ENCODE measurements at regions of chr1 and their contacts with region 1.

Region 1: DNA sequence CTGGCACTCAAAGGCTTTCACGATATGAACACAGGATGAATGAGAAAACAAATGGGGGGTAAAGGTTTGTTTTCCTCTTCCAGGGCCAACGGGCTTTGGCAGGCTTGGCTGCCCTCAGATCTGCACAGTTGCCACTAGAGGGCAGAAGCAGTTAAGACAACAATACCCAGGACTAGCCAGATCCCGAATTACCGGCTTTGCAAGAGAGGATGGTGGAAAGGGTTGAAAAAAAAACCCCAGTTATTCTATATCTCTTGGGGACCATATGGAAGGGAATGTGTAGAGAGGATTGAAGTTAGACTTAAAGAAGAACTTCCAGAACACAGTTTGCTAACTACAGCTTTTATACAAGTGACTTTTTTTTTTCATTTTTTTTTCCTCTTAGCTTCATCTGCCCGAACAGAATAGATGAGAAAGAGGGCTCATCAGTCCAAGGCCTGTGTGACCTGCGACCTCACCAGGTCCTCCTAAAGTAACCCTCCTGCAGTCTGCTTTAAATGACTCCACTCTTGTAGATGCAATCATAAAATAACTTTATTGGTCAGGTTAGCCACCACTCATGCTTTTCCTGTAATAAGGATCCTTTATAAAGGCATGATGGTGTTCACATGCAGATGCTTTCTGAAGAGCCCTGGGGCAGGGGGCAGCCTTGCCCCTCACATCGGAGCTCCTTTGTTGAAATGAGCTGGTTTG is 10.7 kb downstream of the FMOD start:
- DNase-seq: peak; percentile 94
- ATAC-seq: peak; percentile 90
- H3K4me3 ChIP-seq: no peak overlapping the region
- H3K27ac ChIP-seq: no peak overlapping the region
- H3K4me1 ChIP-seq: no peaks in the 10 kb centered on the region; the same call in 1 of the 2 replicates
- H3K27me3 ChIP-seq: peaks cover 26% of the 10 kb centered on the region
- CTCF ChIP-seq: peak; percentile 98

Region 2: DNA sequence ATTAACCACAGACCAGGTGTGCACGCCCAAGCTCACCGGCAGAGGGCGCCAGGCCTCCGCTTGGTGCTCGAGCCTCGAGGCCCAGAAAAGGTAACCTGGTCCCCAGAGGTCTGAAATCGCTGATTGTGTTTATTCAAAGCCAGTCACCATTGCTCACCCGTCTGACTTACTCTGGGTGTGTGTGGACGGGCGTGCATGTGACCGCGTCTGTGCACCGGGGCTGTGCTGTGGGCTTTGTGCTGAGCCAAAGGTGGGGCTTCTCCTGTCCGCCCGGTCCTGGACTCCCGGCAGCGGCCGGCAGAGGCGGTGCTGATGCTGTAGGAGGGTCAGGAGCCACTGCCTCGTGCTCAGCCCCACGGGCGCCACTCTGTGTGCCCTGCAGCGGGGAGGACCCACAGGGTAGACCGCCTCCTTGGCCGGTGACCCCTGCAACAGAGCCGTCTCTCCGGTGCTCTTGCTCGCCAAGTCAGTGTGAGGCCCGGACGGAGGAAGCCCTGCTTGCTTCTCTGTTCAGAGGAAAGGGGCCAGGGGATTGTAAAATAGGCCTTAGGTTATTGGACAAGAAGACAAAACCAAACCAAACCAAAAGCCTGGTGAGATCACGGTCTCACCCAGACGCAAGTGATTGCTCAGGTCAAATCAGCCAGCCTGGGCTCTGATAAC is 66.9 kb before region 1 on chr1:
- CTCF ChIA-PET with region 1: interaction called, 9 read pairs
- POLR2A ChIA-PET with region 1: no interaction called
- intact Hi-C with region 1: loop called (anchors 1 kb)
- DNase-seq: peak; percentile 98
- ATAC-seq: peak; percentile 90
- H3K4me3 ChIP-seq: peak overlapping the region; percentile 33; the same call in 1 of the 2 replicates
- H3K27ac ChIP-seq: no peak overlapping the region
- H3K4me1 ChIP-seq: peaks cover 19% of the 10 kb centered on the region
- H3K27me3 ChIP-seq: no peaks in the 10 kb centered on the region
- CTCF ChIP-seq: peak; percentile 99

Region 3: DNA sequence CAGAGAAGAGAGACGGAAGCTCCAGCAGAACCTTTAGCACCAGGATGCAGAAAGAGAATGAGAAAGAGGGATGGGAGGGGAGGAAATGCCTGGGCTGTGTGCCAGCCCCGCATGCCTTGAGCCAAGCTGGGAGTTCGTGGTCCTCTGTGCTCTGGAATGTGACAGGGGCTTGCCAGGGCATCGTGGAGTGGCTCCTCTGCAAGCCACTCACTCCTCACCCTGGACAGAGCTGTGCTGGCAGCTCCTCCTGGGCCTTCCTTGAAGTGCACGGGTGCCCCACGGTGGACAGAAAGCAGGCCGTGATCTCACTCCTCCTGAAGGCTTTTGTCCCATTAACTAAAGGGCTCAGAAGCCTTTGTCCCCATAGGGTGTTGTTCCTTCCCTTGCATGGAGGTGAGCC is 100.5 kb after region 1 on chr1:
- CTCF ChIA-PET with region 1: interaction called, 6 read pairs
- POLR2A ChIA-PET with region 1: no interaction called
- intact Hi-C with region 1: loop called (anchors 1 kb)
- DNase-seq: peak; percentile 47
- ATAC-seq: peak; percentile 95
- H3K4me3 ChIP-seq: no peak overlapping the region
- H3K27ac ChIP-seq: no peak overlapping the region
- H3K4me1 ChIP-seq: no peaks in the 10 kb centered on the region
- H3K27me3 ChIP-seq: peaks cover 66% of the 10 kb centered on the region
- CTCF ChIP-seq: peak; percentile 60

Region 4: GRCh38 chr1:203470229-203470628 is 130.0 kb after region 1 on chr1:
- CTCF ChIA-PET with region 1: interaction called, 11 read pairs
- POLR2A ChIA-PET with region 1: no interaction called
- intact Hi-C with region 1: no loop called
- DNase-seq: no peak
- ATAC-seq: no peak
- H3K4me3 ChIP-seq: no peak overlapping the region
- H3K27ac ChIP-seq: no peak overlapping the region
- H3K4me1 ChIP-seq: 0 out of 2 replicates have a peak, but pooled peaks cover 3% of the 10 kb centered on the region
- H3K27me3 ChIP-seq: peaks cover 10% of the 10 kb centered on the region; the same call in 1 of the 2 replicates
- CTCF ChIP-seq: no peak

Region 5: GRCh38 chr1:203486618-203487370 is 146.5 kb after region 1 on chr1:
- CTCF ChIA-PET with region 1: interaction called, 9 read pairs
- POLR2A ChIA-PET with region 1: no interaction called
- intact Hi-C with region 1: loop called (anchors 1 kb)
- DNase-seq: no peak
- ATAC-seq: no peak
- H3K4me3 ChIP-seq: no peak overlapping the region
- H3K27ac ChIP-seq: no peak overlapping the region
- H3K4me1 ChIP-seq: no peaks in the 10 kb centered on the region
- H3K27me3 ChIP-seq: no peaks in the 10 kb centered on the region
- CTCF ChIP-seq: no peak

Region 6: GRCh38 chr1:203504397-203505250 is 164.4 kb after region 1 on chr1:
- CTCF ChIA-PET with region 1: no interaction called
- POLR2A ChIA-PET with region 1: no interaction called
- intact Hi-C with region 1: loop called (anchors 1 kb)
- DNase-seq: peak; percentile 94
- ATAC-seq: peak; percentile 91
- H3K4me3 ChIP-seq: peak overlapping the region; percentile 14; the same call in 1 of the 2 replicates
- H3K27ac ChIP-seq: no peak overlapping the region
- H3K4me1 ChIP-seq: peaks cover 20% of the 10 kb centered on the region; the same call in 1 of the 2 replicates
- H3K27me3 ChIP-seq: no peaks in the 10 kb centered on the region
- CTCF ChIP-seq: peak; percentile 96

Region 7: GRCh38 chr1:203520315-203520714 is 180.1 kb after region 1 on chr1:
- CTCF ChIA-PET with region 1: no interaction called
- POLR2A ChIA-PET with region 1: no interaction called
- intact Hi-C with region 1: no loop called
- DNase-seq: no peak
- ATAC-seq: peak; percentile 34; the same call in 1 of the 2 replicates
- H3K4me3 ChIP-seq: no peak overlapping the region
- H3K27ac ChIP-seq: no peak overlapping the region
- H3K4me1 ChIP-seq: peaks cover 17% of the 10 kb centered on the region
- H3K27me3 ChIP-seq: no peaks in the 10 kb centered on the region
- CTCF ChIP-seq: no peak

Region 8: GRCh38 chr1:203702130-203702577 is 361.9 kb after region 1 on chr1:
- CTCF ChIA-PET with region 1: interaction called, 3 read pairs
- POLR2A ChIA-PET with region 1: no interaction called
- intact Hi-C with region 1: loop called (anchors 1 kb)
- DNase-seq: peak; percentile 82
- ATAC-seq: peak; percentile 91
- H3K4me3 ChIP-seq: no peak overlapping the region
- H3K27ac ChIP-seq: no peak overlapping the region
- H3K4me1 ChIP-seq: no peaks in the 10 kb centered on the region
- H3K27me3 ChIP-seq: no peaks in the 10 kb centered on the region
- CTCF ChIP-seq: peak; percentile 100